Cardiac septum (tissue), 1 donor: ENCODE measurements at regions of chr2 and their contacts with region 1.

Region 1: DNA sequence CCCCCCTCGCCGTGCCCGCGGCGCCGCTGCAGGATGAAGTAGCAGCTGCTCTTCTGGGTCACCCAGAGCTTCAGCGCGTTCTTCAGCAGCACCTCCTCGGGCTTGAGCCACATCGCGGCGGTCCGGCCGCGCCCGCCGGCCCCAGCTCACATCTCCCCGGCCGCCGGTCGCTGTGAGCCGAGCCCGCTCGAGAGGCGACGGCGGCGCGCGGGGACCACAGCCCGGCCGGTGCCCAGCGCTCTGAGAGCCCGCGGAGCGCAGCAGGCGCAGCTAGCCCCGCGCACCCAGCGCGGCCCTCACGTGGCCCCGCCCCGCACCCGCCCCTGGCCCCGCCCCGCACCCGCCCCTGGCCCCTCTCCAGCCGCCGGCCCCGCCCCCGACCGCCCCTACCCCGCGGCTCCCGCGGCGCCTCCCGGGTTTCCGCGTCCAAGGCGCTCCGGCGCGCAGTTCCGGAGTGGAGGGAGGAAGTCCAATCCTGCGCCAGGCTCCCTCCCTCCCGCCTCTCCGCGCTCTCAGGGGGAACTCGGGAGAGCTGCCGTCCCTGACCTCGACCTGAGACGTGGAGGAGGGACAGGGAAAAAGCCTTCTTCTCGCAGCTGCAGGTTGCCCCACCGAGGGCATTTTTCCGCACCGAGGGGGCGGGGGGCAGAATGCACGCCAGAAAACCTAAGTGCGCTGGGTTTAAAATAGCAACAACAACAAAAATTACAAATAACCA is at the start of gene TBC1D8:
- DNase-seq: peak; percentile 97
- total RNA-seq, gene TBC1D8: 52.3 TPM

Region 2: DNA sequence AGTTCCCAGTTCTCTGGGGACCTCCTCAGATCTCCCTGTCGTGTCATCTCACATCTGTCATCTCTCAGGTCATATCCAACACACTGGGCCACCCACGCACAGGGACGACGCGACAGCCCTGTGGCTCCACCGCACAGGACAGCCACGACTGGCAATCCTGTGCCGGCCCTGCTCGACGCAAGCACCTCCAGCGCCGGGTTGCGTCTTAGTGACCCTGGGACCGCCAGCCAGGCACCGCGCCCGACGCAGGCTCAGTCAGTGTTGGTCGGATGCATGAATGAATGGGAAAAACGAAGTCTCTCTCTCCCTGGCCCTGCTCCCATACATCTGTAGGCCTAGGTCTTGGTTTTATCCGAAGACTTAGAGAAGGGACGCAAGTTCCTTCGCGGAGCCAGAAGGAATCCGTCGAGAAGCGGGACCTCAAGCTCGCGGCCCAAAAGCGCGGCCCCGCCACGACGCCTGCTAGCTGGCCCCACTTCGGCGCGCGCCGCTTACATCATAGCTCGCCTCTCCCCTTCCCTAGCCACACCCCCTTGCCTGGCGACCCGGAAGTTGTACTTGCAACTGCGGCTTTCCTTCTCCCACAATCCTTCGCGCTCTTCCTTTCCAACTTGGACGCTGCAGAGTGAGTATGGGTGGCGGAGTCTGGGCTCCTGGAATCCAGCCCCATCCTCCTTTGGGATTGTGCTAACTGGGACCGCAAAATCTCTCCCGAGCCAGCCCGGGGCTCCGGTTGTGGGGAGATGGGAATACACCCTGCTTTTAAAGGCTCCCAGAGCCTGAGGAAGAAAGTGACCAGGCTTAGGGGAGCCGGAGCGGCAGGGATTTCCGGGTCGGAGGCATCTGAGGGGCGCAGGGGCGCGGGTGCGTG is 149.4 kb before region 1 on chr2 and contains the start of gene RPL31:
- intact Hi-C with region 1: loop called (anchors 2 kb)
- DNase-seq: peak; percentile 98
- total RNA-seq, gene RPL31: 649 TPM

Region 3: GRCh38 chr2:101012706-101013181 is 138.6 kb before region 1 on chr2:
- intact Hi-C with region 1: loop called (anchors 1 kb)
- DNase-seq: no peak

Region 4: DNA sequence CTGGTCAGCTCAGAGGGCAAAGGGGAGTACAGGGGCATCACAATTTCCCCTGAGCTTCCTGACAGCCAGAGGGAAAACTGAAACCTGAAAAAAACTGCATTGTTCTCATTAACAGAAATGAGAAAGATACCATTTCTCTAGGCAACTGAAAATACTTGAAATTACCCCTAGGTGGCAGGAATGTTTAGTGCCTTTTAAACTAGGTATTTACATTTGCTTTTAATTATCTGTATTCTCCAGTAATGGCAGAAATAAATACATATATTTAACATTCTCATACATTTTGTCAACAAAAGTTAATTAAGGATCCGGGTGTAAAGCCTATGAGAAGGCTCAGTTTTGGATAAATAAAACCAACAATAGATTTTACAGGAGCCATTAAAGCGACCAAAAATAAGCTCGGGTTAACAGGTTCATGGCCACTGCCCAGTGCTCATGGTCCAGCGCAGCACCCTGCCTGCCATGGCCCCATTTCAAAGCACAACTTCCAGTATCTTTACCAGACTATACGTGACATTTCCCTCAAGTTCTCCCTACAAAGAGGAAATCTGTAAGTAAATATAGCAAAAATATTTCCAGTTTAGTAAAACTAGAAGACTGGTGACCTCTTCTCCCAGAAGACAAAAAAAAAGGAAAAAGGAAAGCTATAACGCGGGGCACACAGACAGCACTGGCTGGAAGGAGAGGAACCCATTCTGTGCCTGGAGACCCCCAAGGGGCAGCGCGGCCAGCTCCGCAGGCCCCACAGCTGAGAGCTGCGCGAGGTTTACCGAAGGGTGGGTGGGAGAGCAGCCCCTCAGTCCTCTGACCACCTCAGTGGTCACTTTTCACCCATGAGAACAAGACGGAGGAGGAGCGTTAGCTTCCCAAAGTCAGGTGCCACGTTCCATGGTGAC is 114.5 kb before region 1 on chr2:
- intact Hi-C with region 1: loop called (anchors 1 kb)
- DNase-seq: no peak

Region 5: DNA sequence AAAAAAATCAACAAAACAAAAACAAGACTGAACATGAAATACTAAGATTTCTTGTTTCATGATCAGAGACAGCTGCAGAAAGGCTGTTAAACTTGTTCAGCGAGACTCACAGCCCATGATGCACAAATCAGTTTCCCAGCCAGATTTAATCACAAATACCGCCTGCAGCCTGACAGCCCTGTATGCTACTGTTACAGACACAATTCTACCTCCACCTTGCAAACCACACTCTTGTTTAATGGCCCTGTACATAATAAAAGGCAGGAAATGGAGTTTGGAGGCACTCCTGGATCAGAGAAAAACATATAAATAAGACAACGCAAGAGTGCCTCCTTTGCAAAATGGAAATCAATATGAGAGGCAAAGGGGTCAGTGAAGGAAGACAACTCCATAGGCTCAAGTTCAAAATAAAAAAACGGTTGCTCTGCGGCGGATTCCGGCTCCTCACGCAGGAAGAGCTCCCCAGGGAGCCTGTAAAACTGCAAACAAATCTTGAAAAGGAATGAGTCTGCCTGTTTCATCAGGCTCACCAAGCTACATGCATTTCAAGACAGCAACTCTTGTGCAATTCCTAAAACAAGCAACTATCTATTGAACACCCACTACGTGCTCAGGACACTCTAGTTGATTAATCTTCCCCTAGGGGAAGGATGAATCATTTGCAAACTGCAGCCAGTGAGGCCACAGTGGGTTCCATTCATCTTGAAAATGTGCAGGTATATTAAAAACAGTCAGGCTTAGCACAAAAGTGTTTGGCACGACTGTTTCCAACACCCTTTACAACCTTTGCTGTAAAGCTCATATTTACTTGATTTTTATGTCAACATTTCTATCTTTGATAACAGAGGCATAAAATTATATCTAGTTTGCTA is 37.7 kb before region 1 on chr2:
- intact Hi-C with region 1: loop called (anchors 2 kb)
- DNase-seq: no peak

Region 6: DNA sequence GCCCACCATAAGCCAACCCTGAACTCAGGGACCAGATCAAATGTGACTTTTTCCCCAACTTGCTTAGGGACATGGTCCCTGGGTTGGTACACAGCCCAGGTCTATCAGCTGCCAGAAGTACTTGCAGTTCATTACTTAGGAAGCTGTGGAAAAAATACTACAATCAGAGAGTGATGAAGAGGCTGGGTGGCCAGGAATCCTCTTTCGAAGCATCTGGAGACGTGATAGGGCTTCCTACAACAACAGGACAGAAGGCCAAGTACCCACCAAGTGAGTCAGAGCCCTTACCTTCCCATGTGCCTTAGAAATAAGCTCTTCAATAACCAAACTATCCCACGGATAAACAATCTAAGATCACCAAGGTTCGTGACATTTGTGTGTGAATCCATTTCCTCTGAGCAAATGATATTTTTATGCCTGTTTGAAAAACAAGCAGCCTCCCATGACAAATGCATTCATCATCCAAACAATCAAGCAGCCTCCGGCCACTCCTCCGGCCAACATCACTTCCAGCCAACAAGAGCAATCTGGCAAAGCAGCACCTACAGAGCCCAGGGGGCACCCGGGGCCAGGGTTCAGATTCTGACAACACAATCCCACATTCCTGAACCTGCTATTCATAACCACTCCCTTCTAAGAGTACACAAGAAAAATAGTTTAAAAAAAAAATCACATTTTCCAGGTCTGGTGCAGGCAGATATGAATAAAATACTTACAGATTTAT is 26.5 kb before region 1 on chr2:
- intact Hi-C with region 1: loop called (anchors 1 kb)
- DNase-seq: peak; percentile 81

Region 7: GRCh38 chr2:101252408-101253012 is 101.2 kb after region 1 on chr2 and contains the start of gene CNOT11:
- intact Hi-C with region 1: loop called (anchors 5 kb)
- DNase-seq: peak; percentile 100
- total RNA-seq, gene CNOT11: 46.2 TPM